Heart right ventricle (tissue), 16 donors: ENCODE measurements at regions of chrX and their contacts with region 1.

Region 1: GRCh38 chrX:12814420-12814819 is 23.2 kb downstream of the PRPS2 start:
- DNase-seq: peak in 1 of 2 donors; percentile 13
- ATAC-seq: no peak
- H3K4me3 ChIP-seq: no peak overlapping the region
- H3K27ac ChIP-seq: no peak overlapping the region
- H3K4me1 ChIP-seq: no peaks in the 10 kb centered on the region
- H3K27me3 ChIP-seq: peaks cover 0 to 41% (median 0%) of the 10 kb centered on the region in 7 donors
- CTCF ChIP-seq: peak in 8 of 9 donors; percentile 15 to 56 (median 46)

Region 2: DNA sequence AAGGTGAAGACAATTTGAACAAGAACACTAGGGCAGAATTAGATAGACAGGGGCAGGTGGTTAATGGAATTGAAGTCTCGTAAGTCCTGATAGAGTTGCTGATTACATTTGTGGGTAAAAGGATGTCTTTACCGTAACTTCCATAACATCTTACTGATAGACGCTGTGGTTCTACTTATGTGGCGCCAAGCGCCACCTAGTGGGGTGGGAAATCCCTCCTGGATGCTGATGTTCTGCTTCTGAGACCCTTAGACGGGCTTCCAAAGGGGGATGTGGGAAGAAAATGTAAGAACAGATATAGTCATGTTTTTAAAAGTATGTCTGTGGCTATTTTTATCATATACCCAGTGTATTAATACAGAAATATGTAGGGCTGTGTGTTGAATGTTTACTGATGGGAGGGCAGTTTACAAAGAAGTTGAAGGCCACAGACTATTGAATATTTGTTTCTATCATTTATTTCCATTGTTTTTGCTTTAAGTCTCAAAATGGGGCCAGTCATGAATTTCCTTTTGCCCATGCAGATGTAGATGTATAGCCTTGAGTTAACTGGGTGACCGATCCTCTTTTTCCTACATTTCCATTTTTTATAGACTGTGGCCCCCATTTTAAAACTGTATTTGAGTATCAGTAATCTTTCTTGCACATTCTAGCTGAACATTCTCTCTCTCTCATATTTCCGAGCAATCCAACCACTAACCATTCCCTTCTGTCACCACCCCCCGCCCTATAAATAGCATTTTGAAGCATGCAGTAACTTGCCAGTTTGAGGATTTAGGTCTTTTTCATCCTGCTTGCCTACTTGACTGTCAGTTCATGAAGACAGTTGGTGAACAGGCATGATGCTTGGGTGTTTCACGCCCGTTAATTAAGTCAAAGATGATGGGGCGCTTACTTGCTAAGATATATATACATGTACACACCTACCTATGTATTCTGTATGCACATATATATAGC is 79.9 kb after region 1 on chrX:
- intact Hi-C with region 1: loop called in 9 of 10 experiments (anchors 2 to 10 kb)
- DNase-seq: no peak
- ATAC-seq: no peak
- H3K4me3 ChIP-seq: no peak overlapping the region
- H3K27ac ChIP-seq: no peak overlapping the region
- H3K4me1 ChIP-seq: peaks cover 0 to 24% (median 0%) of the 10 kb centered on the region in 9 donors
- H3K27me3 ChIP-seq: peaks cover 0 to 4% (median 0%) of the 10 kb centered on the region in 7 donors
- CTCF ChIP-seq: peak in 8 of 9 donors; percentile 17 to 73 (median 42)

Region 3: DNA sequence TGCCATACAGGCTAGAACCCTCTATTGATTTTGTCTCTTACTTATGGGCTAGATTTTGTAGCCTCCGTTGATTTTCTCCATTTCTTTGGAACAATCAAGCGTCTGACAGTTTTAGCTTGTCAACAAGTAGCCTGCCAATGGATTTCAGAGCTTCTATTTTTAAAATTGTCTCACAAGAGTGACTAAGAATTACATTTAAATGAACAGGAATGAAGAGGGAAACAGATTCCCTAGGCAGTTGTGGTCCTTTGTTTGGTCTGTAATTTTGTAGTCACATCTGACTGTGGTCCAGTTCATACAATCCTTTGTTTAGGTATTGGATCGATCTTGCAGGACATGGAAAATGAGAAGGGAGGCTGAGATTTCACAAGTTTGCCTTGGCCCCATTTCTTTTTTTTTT is 668.3 kb after region 1 on chrX:
- intact Hi-C with region 1: loop called in 3 of 10 experiments (anchors 5 to 10 kb)
- DNase-seq: no peak
- ATAC-seq: no peak
- H3K4me3 ChIP-seq: no peak overlapping the region
- H3K27ac ChIP-seq: peak overlapping the region in 5 of 10 donors; percentile 44 to 67 (median 56)
- H3K4me1 ChIP-seq: peaks cover 0 to 18% (median 6%) of the 10 kb centered on the region in 9 donors
- H3K27me3 ChIP-seq: peaks cover 0 to 61% (median 0%) of the 10 kb centered on the region in 7 donors
- CTCF ChIP-seq: no peak

Region 4: DNA sequence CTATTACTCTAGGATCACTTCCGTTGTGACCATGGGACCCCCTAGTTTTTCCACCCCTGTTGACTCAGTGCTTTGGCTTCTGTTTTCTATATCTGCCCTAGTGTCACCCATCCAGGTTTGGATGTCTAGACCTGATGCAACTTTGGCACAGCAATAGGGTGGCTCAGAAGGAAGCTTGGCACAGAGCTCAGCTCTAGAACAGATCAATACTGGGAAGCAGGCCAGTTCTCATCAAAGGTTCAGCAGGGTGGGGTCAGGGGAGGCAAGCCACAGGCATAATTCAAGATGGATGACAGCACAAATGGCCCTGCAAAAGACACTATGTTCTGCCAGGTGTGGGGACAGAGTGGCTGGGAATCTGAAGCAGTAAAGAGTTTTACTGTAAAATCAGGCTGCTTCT is 680.8 kb after region 1 on chrX:
- intact Hi-C with region 1: loop called in 1 of 10 experiments (anchors 10 kb)
- DNase-seq: no peak
- ATAC-seq: no peak
- H3K4me3 ChIP-seq: no peak overlapping the region
- H3K27ac ChIP-seq: no peak overlapping the region
- H3K4me1 ChIP-seq: no peaks in the 10 kb centered on the region
- H3K27me3 ChIP-seq: peaks cover 0 to 51% (median 0%) of the 10 kb centered on the region in 7 donors
- CTCF ChIP-seq: no peak